Mammary epithelial cell (primary cell): ENCODE measurements at regions of chr11 and their contacts with region 1.

Region 1: DNA sequence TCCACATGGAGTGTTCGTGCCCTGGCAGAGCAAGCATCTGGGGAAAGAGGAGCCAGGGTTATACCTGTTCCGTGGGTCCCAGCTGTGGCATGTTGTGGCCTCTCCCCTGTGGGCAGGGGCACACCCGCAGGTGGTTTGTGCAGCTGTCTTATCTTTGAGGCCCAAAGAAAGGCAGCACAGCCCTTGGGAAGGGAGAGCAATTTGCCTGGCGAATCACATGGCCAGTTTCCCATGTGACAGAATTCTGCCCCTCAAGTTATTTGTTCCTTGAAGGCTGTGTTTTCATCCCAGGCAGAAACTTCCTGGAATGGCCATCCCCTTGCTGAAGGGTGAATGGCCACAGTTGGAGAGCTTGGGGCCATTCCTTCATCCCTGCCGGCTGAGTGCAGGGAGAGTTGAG is 16.4 kb upstream of the COX8A start:
- DNase-seq: no peak
- H3K4me3 ChIP-seq: no peak overlapping the region
- H3K27ac ChIP-seq: no peak overlapping the region
- H3K4me1 ChIP-seq: peaks cover 15% of the 10 kb centered on the region
- H3K27me3 ChIP-seq: no peaks in the 10 kb centered on the region
- CTCF ChIP-seq: no peak

Region 2: DNA sequence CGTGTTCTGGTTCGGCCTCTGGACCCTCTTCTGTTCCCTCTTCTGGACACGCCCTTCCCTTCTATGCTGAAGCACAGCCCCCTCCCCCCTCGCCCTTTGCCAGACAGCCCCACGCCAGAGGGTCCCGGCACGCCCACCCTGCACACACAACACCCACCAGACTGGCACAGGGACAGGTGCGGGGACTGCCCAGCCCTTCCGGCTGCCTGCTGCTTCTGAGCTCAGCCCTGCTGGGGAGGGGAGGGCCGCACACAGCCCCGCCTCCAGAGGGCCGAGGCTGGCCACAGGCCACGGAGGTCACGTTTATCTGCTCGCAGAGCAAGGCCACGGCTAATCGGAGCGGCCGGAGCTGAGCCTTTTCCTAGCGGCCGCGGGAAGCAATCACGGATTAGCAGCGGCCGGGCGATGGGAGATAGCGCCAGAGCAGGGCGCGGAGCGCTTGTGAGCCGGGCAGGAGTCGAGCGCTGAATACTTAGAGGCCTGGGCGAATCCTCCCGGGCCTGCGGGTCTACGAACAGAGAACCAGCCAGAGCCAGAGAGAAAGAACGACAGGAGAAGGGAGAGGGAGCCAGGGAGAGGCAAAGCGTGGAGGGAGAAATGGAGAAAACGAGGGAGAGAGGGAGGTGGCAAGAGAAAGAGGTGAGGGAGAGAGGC is 49.7 kb after region 1 on chr11:
- CTCF ChIA-PET with region 1: no interaction called
- dilution Hi-C with region 1: loop called (anchors 5 kb)
- in situ Hi-C with region 1: no loop called
- intact Hi-C with region 1: no loop called
- DNase-seq: no peak
- H3K4me3 ChIP-seq: peak overlapping the region in 2 of 3 experiments; percentile 29 to 40
- H3K27ac ChIP-seq: no peak overlapping the region
- H3K4me1 ChIP-seq: peaks cover 13% of the 10 kb centered on the region
- H3K27me3 ChIP-seq: no peaks in the 10 kb centered on the region
- CTCF ChIP-seq: peak in 1 of 2 donors; percentile 20